CD4-positive, alpha-beta memory T cell (primary cell): ENCODE measurements at regions of chr2 and their contacts with region 1.

Region 1: GRCh38 chr2:206765242-206766056 is at the starts of genes FASTKD2 and MDH1B:
- DNase-seq: peak; percentile 88 to 91 (median 89)
- H3K4me3 ChIP-seq: peak within 1 kb of the TSS; percentile 54 to 82
- H3K4me3 Mint-ChIP-seq: peak within 1 kb of the TSS; percentile 89 to 98 (median 95)
- H3K27ac ChIP-seq: peak within 1 kb of the TSS; percentile 91
- H3K27ac Mint-ChIP-seq: peak within 1 kb of the TSS; percentile 96 to 99 (median 97)
- H3K4me1 ChIP-seq: peaks cover 39% of the 10 kb centered on the region
- H3K4me1 Mint-ChIP-seq: peaks cover 20 to 45% (median 36%) of the 10 kb centered on the region in 4 donors
- H3K27me3 ChIP-seq: no peaks in the 10 kb centered on the region
- H3K27me3 Mint-ChIP-seq: no peaks in the 10 kb centered on the region
- total RNA-seq, gene FASTKD2: 23.0 to 23.4 TPM
- total RNA-seq, gene MDH1B: 0.17 TPM in 1 of 2 experiments, not detected in the other

Region 2: GRCh38 chr2:206159346-206160124 is 605.9 kb before region 1 on chr2 and contains the starts of genes EEF1B2 and NDUFS1:
- CTCF ChIA-PET with region 1: no interaction called
- POLR2A ChIA-PET with region 1: no interaction called
- intact Hi-C with region 1: loop called (anchors 1 kb)
- DNase-seq: peak; percentile 96 to 97 (median 97)
- H3K4me3 ChIP-seq: peak within 1 kb of the TSS; percentile 69 to 78
- H3K4me3 Mint-ChIP-seq: peak within 1 kb of the TSS; percentile 97 to 100 (median 100)
- H3K27ac ChIP-seq: peak within 1 kb of the TSS; percentile 94
- H3K27ac Mint-ChIP-seq: peak within 1 kb of the TSS; percentile 98 to 100 (median 99)
- H3K4me1 ChIP-seq: peaks cover 47% of the 10 kb centered on the region
- H3K4me1 Mint-ChIP-seq: peaks cover 38 to 71% (median 56%) of the 10 kb centered on the region in 4 donors
- H3K27me3 ChIP-seq: no peaks in the 10 kb centered on the region
- H3K27me3 Mint-ChIP-seq: no peaks in the 10 kb centered on the region
- total RNA-seq, gene EEF1B2: 947 to 1,026 TPM
- total RNA-seq, gene NDUFS1: 53.4 to 57.6 TPM

Region 3: GRCh38 chr2:206783718-206784117 is 18.3 kb after region 1 on chr2:
- CTCF ChIA-PET with region 1: interaction called, 11 read pairs
- POLR2A ChIA-PET with region 1: interaction called, 4 read pairs
- intact Hi-C with region 1: no loop called
- DNase-seq: no peak
- H3K4me3 ChIP-seq: no peak overlapping the region
- H3K4me3 Mint-ChIP-seq: no peak overlapping the region
- H3K27ac ChIP-seq: no peak overlapping the region
- H3K27ac Mint-ChIP-seq: peak overlapping the region in 1 of 7 donors; percentile 17
- H3K4me1 ChIP-seq: no peaks in the 10 kb centered on the region
- H3K4me1 Mint-ChIP-seq: peaks cover 5 to 18% (median 15%) of the 10 kb centered on the region in 4 donors
- H3K27me3 ChIP-seq: no peaks in the 10 kb centered on the region
- H3K27me3 Mint-ChIP-seq: no peaks in the 10 kb centered on the region

Region 4: GRCh38 chr2:206846981-206847834 is 81.8 kb after region 1 on chr2:
- CTCF ChIA-PET with region 1: no interaction called
- POLR2A ChIA-PET with region 1: no interaction called
- intact Hi-C with region 1: no loop called
- DNase-seq: no peak
- H3K4me3 ChIP-seq: no peak overlapping the region
- H3K4me3 Mint-ChIP-seq: no peak overlapping the region
- H3K27ac ChIP-seq: no peak overlapping the region
- H3K27ac Mint-ChIP-seq: no peak overlapping the region
- H3K4me1 ChIP-seq: no peaks in the 10 kb centered on the region
- H3K4me1 Mint-ChIP-seq: no peaks in the 10 kb centered on the region
- H3K27me3 ChIP-seq: no peaks in the 10 kb centered on the region
- H3K27me3 Mint-ChIP-seq: no peaks in the 10 kb centered on the region

Region 5: DNA sequence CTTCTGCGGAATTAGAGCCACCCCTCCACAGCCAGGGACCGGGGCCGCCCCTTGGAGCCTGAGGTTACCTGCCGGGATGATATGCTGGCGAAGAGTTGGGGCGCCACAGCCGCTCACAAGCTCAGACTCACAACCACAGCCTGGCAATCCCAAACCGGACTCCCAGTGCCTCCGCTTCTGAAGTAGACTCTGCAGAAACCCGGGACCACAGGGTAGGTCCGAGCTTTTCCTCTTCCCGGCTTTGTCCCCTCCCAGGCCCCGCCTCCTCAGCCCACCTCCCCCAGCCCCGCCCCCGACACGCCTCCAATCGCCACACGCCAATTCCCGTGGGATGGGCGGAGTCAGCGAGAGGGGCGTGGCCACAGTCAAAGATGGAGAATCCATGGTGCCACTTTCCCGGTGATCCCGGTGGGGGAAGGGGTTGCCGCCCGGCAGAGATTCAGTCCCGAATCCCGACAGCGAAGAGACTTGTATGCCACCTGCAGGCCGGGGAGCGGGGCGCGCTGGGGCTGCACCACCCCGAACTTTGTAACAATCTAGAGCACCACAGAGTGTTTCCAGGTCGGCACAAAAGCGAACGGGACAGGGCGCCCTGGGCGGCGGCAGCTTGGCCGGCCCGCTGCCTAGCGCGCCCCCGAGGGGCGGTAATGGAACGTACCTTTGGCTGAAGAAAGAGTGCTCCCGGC is 1489.6 kb after region 1 on chr2 and contains the start of gene IDH1:
- CTCF ChIA-PET with region 1: no interaction called
- POLR2A ChIA-PET with region 1: no interaction called
- intact Hi-C with region 1: loop called (anchors 5 kb)
- DNase-seq: peak; percentile 85 to 92 (median 88)
- H3K4me3 ChIP-seq: peak within 1 kb of the TSS; percentile 91 to 92
- H3K4me3 Mint-ChIP-seq: peak within 1 kb of the TSS; percentile 93 to 100 (median 98)
- H3K27ac ChIP-seq: peak within 1 kb of the TSS; percentile 43
- H3K27ac Mint-ChIP-seq: peak within 1 kb of the TSS; percentile 79 to 94 (median 86)
- H3K4me1 ChIP-seq: peaks cover 14% of the 10 kb centered on the region
- H3K4me1 Mint-ChIP-seq: peaks cover 12 to 32% (median 18%) of the 10 kb centered on the region in 4 donors
- H3K27me3 ChIP-seq: no peaks in the 10 kb centered on the region
- H3K27me3 Mint-ChIP-seq: no peaks in the 10 kb centered on the region
- total RNA-seq, gene IDH1: 25.6 to 25.9 TPM